CD4-positive, alpha-beta memory T cell (primary cell): ENCODE measurements at regions of chr22 and their contacts with region 1.

Region 1: GRCh38 chr22:27885977-27886842 is 32.8 kb downstream of the PITPNB start:
- DNase-seq: peak; percentile 30 to 49 (median 38)
- H3K4me3 ChIP-seq: no peak overlapping the region
- H3K4me3 Mint-ChIP-seq: no peak overlapping the region
- H3K27ac ChIP-seq: no peak overlapping the region
- H3K27ac Mint-ChIP-seq: peak overlapping the region in 3 of 7 donors; percentile 19 to 65 (median 57)
- H3K4me1 ChIP-seq: no peaks in the 10 kb centered on the region
- H3K4me1 Mint-ChIP-seq: peaks cover 0 to 3% (median 1%) of the 10 kb centered on the region in 4 donors
- H3K27me3 ChIP-seq: no peaks in the 10 kb centered on the region
- H3K27me3 Mint-ChIP-seq: no peaks in the 10 kb centered on the region

Region 2: GRCh38 chr22:27726697-27727449 is 159.3 kb before region 1 on chr22:
- CTCF ChIA-PET with region 1: no interaction called
- POLR2A ChIA-PET with region 1: no interaction called
- intact Hi-C with region 1: no loop called
- DNase-seq: no peak
- H3K4me3 ChIP-seq: no peak overlapping the region
- H3K4me3 Mint-ChIP-seq: no peak overlapping the region
- H3K27ac ChIP-seq: no peak overlapping the region
- H3K27ac Mint-ChIP-seq: no peak overlapping the region
- H3K4me1 ChIP-seq: no peaks in the 10 kb centered on the region
- H3K4me1 Mint-ChIP-seq: no peaks in the 10 kb centered on the region
- H3K27me3 ChIP-seq: no peaks in the 10 kb centered on the region
- H3K27me3 Mint-ChIP-seq: peaks cover 1 to 5% of the 10 kb centered on the region in 2 donors

Region 3: DNA sequence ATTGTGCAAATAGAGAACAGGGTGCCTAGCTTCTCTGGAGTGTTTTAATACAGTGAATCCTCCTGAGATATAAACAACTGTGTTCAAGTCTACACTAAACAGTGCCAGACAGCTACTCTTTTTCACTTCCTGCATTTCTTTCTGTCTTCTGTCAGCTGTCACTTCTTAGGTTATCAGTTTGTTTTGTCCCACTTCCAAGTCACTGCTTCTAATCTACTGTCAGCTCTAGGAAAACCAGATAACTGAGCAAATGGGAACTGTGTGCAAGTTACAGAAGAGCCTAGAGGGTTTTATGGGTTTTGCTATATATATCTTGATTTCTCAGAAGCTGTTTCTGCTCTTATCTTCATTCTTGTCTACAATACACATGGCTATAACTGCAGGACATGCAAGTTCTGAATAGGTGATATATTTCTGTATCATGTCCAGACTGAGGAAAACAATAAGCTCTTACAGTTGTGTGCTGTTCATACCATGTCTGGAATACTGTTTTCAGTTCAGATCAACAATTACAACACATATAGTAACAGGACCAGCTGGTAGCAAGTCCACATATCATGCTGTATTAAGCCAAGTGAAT is 27.0 kb after region 1 on chr22:
- CTCF ChIA-PET with region 1: interaction called, 11 read pairs
- POLR2A ChIA-PET with region 1: interaction called, 3 read pairs
- intact Hi-C with region 1: loop called (anchors 2 kb)
- DNase-seq: no peak
- H3K4me3 ChIP-seq: no peak overlapping the region
- H3K4me3 Mint-ChIP-seq: no peak overlapping the region
- H3K27ac ChIP-seq: no peak overlapping the region
- H3K27ac Mint-ChIP-seq: peak overlapping the region in 1 of 7 donors; percentile 43
- H3K4me1 ChIP-seq: peaks cover 48% of the 10 kb centered on the region
- H3K4me1 Mint-ChIP-seq: peaks cover 47 to 67% (median 54%) of the 10 kb centered on the region in 4 donors
- H3K27me3 ChIP-seq: no peaks in the 10 kb centered on the region
- H3K27me3 Mint-ChIP-seq: no peaks in the 10 kb centered on the region

Region 4: GRCh38 chr22:27987557-27987956 is 101.3 kb after region 1 on chr22:
- CTCF ChIA-PET with region 1: no interaction called
- POLR2A ChIA-PET with region 1: no interaction called
- intact Hi-C with region 1: no loop called
- DNase-seq: no peak
- H3K4me3 ChIP-seq: no peak overlapping the region
- H3K4me3 Mint-ChIP-seq: no peak overlapping the region
- H3K27ac ChIP-seq: no peak overlapping the region
- H3K27ac Mint-ChIP-seq: peak overlapping the region in 1 of 7 donors; percentile 35
- H3K4me1 ChIP-seq: no peaks in the 10 kb centered on the region
- H3K4me1 Mint-ChIP-seq: peaks cover 0 to 5% (median 2%) of the 10 kb centered on the region in 4 donors
- H3K27me3 ChIP-seq: no peaks in the 10 kb centered on the region
- H3K27me3 Mint-ChIP-seq: no peaks in the 10 kb centered on the region

Region 5: GRCh38 chr22:28442264-28442710 is 556.1 kb after region 1 on chr22:
- CTCF ChIA-PET with region 1: interaction called, 3 read pairs
- POLR2A ChIA-PET with region 1: no interaction called
- intact Hi-C with region 1: loop called (anchors 5 kb)
- DNase-seq: peak; percentile 21 to 57 (median 43)
- H3K4me3 ChIP-seq: peak overlapping the region; percentile 36 to 41
- H3K4me3 Mint-ChIP-seq: peak overlapping the region; percentile 61 to 87 (median 82)
- H3K27ac ChIP-seq: no peak overlapping the region
- H3K27ac Mint-ChIP-seq: no peak overlapping the region
- H3K4me1 ChIP-seq: peaks cover 12% of the 10 kb centered on the region
- H3K4me1 Mint-ChIP-seq: peaks cover 5 to 19% (median 9%) of the 10 kb centered on the region in 4 donors
- H3K27me3 ChIP-seq: peaks cover 10% of the 10 kb centered on the region
- H3K27me3 Mint-ChIP-seq: peaks cover 18 to 25% of the 10 kb centered on the region in 2 donors

Region 6: DNA sequence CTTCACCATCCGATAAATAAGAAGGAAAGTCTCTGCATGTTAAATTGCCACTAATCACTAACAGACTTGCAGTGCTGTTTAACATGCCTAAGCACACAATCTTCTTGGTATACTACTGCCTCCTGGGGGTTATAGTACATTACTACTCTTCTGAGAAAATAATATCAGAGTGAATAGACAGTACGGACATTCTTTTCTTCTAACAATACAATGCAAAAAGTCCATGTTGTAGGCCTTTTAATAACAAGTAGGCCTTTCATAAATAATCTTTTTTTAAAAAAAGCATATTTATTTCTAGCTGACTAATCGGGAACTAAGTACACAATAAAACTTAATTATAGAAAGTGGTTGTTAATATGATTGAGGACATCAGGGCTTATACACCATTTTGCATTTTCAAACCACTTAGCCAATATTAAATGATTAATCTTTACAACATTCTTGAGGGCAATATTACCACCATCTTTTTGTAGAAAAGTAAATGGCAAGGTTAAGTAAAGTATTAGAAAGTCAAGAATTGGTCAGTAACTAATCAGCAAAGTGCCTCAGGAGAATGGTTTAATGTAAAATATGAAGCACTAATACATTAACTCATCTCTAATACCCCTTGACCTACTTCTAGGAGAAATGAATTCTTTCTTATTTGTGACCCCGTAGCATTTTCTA is 708.7 kb after region 1 on chr22:
- CTCF ChIA-PET with region 1: interaction called, 3 read pairs
- POLR2A ChIA-PET with region 1: no interaction called
- intact Hi-C with region 1: loop called (anchors 5 kb)
- DNase-seq: peak in 4 of 5 donors; percentile 13 to 45 (median 32)
- H3K4me3 ChIP-seq: no peak overlapping the region
- H3K4me3 Mint-ChIP-seq: no peak overlapping the region
- H3K27ac ChIP-seq: no peak overlapping the region
- H3K27ac Mint-ChIP-seq: no peak overlapping the region
- H3K4me1 ChIP-seq: no peaks in the 10 kb centered on the region
- H3K4me1 Mint-ChIP-seq: no peaks in the 10 kb centered on the region
- H3K27me3 ChIP-seq: peaks cover 7% of the 10 kb centered on the region
- H3K27me3 Mint-ChIP-seq: peaks cover 5 to 7% of the 10 kb centered on the region in 2 donors